Right lobe of liver (tissue), 6 donors: ENCODE measurements at regions of chr22 and their contacts with region 1.

Region 1: GRCh38 chr22:49767355-49768062 is 60.2 kb downstream of the BRD1 start:
- DNase-seq: peak; percentile 14 to 44 (median 35)
- ATAC-seq: peak; percentile 42 to 74 (median 72)
- H3K4me3 ChIP-seq: no peak overlapping the region
- H3K27ac ChIP-seq: no peak overlapping the region
- H3K4me1 ChIP-seq: no peaks in the 10 kb centered on the region
- H3K27me3 ChIP-seq: no peaks in the 10 kb centered on the region
- CTCF ChIP-seq: peak; percentile 65 to 75 (median 70)
- POLR2A ChIP-seq: no peak

Region 2: DNA sequence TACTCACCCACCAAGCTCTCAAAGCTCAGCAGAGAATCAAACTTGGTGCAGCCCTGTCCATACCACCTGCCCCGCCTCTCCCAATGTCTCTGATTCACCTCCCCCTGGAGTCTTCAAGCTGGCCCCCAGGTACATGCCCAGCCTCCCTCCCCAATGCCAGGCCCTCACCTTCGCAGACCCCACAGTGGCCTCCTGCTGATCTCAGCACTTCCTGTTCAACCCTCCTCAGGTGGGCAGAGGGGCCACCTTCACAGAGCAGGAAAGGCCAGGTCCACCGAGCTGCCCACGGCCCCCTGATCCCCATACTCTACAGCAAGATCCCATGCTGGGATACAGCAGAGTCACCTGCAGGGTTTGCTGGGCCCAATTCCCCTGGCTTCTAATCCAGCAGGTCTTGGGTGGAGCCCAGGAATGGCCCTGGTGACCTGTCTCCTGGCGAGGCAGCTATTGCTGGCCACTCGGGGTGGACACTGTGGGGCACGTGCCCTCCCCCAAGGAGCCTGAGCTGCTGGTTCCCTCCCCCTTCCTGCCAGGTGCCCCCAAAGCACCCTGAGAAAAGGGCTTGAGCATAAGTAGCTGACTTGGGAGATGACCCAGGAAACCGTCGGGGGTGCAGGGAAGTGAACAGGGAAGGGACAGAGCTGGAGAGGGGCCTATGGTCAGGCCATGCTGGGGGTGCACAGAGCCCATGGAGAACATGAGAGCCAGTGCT is 90.6 kb before region 1 on chr22:
- intact Hi-C with region 1: no loop called
- DNase-seq: no peak
- ATAC-seq: peak in 1 of 4 donors; percentile 24
- H3K4me3 ChIP-seq: no peak overlapping the region
- H3K27ac ChIP-seq: no peak overlapping the region
- H3K4me1 ChIP-seq: no peaks in the 10 kb centered on the region
- H3K27me3 ChIP-seq: no peaks in the 10 kb centered on the region
- CTCF ChIP-seq: no peak
- POLR2A ChIP-seq: no peak

Region 3: DNA sequence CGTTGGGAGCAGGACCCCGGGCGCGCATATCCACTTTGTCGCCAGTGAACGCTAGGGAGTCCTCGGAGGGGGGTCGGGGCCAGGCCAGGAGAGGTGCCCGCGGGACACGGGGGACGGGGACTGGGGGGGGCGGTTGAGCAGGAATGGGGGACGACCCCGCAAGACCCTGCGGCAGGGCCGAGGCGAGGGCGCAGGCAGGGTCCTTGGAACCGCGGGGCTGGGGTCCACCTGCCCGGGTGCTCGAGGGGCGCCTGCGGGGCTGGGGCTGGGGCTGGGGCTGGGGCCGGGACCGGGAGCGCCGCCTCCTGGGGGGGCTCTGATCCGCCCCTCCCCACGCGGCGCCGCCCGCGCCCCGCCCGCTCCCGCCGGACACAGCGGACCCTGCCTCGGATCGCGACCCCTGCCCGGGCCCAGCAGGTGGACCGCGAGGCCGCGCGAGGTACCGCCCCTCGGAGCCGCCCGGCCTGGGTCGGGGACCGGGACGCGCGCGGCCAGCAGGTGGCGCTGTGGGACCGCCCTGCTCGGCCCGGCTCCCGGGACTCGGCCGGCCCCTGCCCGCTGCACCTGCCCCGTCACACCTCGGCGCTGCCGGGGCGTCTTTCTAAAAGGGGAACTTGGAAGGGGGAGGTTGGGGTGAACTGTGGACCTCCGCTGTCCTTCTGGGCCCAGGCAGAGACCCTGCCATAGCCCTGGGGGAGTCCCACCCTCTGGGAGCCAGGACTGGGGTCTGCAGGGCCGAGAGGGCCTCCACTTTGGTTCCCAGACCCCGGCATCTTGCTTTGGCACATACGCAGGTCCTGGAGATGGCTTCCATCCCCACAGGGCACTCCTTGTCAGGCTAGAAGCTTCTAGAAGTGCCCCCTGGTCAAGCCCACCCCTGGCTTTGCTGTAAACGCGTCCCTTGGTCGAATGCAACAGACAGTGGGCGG is 162.0 kb after region 1 on chr22:
- intact Hi-C with region 1: loop called in 1 of 2 experiments (anchors 10 kb)
- DNase-seq: peak; percentile 73 to 80 (median 76)
- ATAC-seq: peak; percentile 51 to 70 (median 56)
- H3K4me3 ChIP-seq: no peak overlapping the region
- H3K27ac ChIP-seq: no peak overlapping the region
- H3K4me1 ChIP-seq: peaks cover 0 to 21% (median 13%) of the 10 kb centered on the region in 4 donors
- H3K27me3 ChIP-seq: no peaks in the 10 kb centered on the region
- CTCF ChIP-seq: peak; percentile 80 to 99 (median 90)
- POLR2A ChIP-seq: no peak

Region 4: GRCh38 chr22:50030297-50031188 is 263.0 kb after region 1 on chr22:
- intact Hi-C with region 1: loop called (anchors 5 to 10 kb)
- DNase-seq: peak; percentile 77 to 80 (median 79)
- ATAC-seq: peak; percentile 90 to 97 (median 91)
- H3K4me3 ChIP-seq: no peak overlapping the region
- H3K27ac ChIP-seq: no peak overlapping the region
- H3K4me1 ChIP-seq: peaks cover 0 to 8% (median 0%) of the 10 kb centered on the region in 4 donors
- H3K27me3 ChIP-seq: no peaks in the 10 kb centered on the region
- CTCF ChIP-seq: peak; percentile 88 to 97 (median 92)
- POLR2A ChIP-seq: no peak